Activated CD4-positive, alpha-beta T cell treated with anti-CD3 and anti-CD28 coated beads, Interleukin-2, amount 10 ng/mL, durations not matched to agents 24 days and 14 days (primary cell): ENCODE measurements at regions of chr1 and their contacts with region 1.

Region 1: DNA sequence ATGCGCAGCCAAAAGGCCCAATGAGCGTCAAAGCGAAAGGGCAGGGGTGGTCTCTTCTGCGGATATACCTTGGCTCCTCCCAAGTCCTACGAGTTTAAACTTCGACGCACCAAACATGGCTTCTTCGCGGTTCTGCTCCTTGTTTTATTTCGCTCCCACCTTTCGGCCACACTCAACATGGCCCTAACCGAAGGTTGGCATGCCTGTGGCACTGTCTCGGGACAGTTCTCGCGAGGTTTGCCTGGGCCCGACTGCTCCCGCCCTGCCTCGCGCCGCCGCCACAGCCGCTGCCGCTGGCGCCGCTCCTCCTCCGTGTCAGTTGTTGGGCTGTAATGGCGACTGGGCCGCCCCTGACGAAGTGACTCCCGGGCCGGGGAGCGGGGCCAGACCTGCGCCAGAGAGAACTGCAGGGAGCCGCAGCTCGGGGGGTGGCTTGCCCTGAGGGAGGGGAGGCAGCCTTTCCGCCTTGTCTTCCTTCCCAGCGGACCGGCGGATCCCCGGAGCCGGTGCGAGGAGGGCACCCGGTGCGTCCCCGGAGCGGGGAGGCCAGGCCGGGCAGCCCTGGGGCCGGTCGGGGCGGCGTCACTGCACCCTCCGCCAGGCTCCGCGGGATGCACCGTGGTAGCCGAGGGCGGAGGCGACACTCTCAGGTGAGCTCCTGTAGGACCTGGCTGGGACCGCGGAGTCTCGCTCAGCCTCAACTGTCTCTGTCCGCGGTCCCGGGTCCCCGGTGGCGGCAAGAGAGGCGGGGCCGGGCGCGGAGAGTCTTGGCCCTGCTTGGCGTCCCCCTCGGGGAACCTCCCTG is at the start of gene CEP350:
- DNase-seq: peak; percentile 99
- H3K4me3 Mint-ChIP-seq: peak within 1 kb of the TSS; percentile 88
- H3K27ac Mint-ChIP-seq: peak within 1 kb of the TSS; percentile 94
- H3K4me1 Mint-ChIP-seq: peaks cover 32% of the 10 kb centered on the region
- H3K27me3 Mint-ChIP-seq: no peaks in the 10 kb centered on the region
- total RNA-seq, gene CEP350: 35.0 and 43.6 TPM in 2 replicates

Region 2: DNA sequence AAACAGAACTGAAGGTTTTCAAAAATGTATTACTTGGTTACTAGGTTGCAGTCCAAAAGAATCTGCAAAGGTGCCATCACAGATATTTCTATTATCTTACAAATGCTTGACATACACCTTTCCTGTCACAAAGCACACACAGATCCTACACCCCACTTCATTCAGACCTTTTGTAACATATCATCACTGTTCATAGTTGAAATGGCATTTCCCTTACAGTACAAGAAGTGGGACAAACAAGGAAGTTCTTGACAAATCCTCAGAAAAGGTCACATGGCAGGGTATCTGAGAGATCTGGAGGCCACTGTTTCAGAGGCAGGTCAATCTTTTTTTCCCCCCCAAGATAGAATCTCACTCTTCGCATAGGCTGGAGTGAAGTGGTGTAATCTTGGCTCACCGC is 98.4 kb before region 1 on chr1:
- intact Hi-C with region 1: no loop called
- DNase-seq: no peak
- H3K4me3 Mint-ChIP-seq: no peak overlapping the region
- H3K27ac Mint-ChIP-seq: no peak overlapping the region
- H3K4me1 Mint-ChIP-seq: peaks cover 2% of the 10 kb centered on the region
- H3K27me3 Mint-ChIP-seq: no peaks in the 10 kb centered on the region

Region 3: DNA sequence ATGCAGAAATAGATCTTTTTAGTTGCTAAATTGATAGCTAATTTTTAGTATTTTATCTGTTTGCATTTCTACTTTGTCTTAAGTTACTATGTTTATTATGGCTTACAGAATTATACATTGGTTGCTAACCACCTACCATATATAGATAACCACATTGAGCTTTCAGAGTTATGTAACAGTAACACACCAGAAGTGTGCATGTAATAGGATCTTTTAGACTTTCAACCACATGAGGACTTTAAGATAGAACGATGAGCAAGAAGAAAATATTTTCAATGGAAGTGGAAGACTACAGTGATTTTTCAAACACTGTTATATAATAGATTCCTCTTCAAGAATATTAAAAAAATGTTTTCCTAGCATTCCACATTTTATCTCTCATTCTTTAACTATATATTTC is 43.8 kb before region 1 on chr1:
- intact Hi-C with region 1: loop called (anchors 5 kb)
- DNase-seq: no peak
- H3K4me3 Mint-ChIP-seq: no peak overlapping the region
- H3K27ac Mint-ChIP-seq: no peak overlapping the region
- H3K4me1 Mint-ChIP-seq: peaks cover 2% of the 10 kb centered on the region
- H3K27me3 Mint-ChIP-seq: no peaks in the 10 kb centered on the region

Region 4: GRCh38 chr1:180154325-180155181 is 199.9 kb after region 1 on chr1 and contains the start of gene QSOX1:
- intact Hi-C with region 1: loop called (anchors 1 kb)
- DNase-seq: peak; percentile 96
- H3K4me3 Mint-ChIP-seq: peak within 1 kb of the TSS; percentile 95
- H3K27ac Mint-ChIP-seq: peak within 1 kb of the TSS; percentile 93
- H3K4me1 Mint-ChIP-seq: peaks cover 29% of the 10 kb centered on the region
- H3K27me3 Mint-ChIP-seq: no peaks in the 10 kb centered on the region
- total RNA-seq, gene QSOX1: 54.2 and 56.2 TPM in 2 replicates